MCF 10A (cell line): ENCODE measurements at regions of chr2 and their contacts with region 1.

Region 1: DNA sequence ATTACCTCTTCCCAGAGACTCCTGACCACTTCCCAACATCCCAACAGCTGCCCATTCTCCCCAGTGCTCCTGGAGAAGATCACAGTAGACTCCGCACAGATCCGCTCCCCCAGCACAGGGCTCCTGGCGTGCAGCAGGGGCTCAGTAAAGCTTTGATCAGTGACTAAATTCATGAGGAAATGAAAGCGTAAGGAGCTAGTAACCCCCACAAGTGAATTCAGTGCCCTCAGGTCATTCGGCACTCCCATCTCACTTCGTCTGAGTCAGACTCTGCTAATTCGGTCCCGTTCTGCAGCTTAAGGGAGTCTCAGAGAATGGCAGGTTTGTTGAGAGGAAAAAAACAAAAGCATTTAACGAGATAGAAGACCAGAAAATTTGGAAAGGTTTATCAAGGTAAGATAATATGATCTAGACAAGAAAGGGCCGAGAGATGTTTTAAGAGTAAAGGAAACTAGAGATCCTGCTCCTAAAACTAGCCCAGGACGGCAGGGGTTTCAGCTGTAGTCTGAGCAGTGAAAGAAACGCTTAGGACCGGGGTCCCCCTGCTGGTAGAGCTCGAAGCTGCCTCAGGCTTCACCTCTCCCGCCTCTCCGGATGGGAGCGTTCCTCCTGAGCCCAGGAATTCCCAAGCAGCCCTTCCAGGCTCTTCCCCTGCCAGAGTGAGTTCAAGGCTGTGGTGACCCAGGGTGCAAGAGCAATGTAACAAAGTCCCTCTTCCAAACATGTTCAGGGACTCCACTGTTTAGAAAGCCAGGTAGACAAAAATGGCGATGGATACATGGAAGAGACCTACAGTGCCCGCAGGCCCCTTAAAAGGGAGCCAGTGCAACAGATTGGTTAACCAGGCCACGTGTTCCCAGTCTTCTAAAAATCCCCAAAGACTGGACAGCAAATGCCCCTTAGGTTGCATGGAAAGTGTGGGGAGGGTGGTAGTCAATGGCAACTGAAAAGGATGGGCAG is 127.3 kb downstream of the DNER start:
- DNase-seq: peak; percentile 94
- H3K4me3 Mint-ChIP-seq: peak overlapping the region; percentile 79
- H3K27ac Mint-ChIP-seq: peak overlapping the region; percentile 87
- H3K4me1 Mint-ChIP-seq: peaks cover 29% of the 10 kb centered on the region
- H3K27me3 Mint-ChIP-seq: no peaks in the 10 kb centered on the region
- CTCF ChIP-seq: peak; percentile 91

Region 2: GRCh38 chr2:227890495-227891079 is 1696.4 kb before region 1 on chr2:
- CTCF ChIA-PET with region 1: no interaction called
- POLR2A ChIA-PET with region 1: no interaction called
- intact Hi-C with region 1: loop called (anchors 2 kb)
- DNase-seq: peak; percentile 77
- H3K4me3 Mint-ChIP-seq: no peak overlapping the region
- H3K27ac Mint-ChIP-seq: no peak overlapping the region
- H3K4me1 Mint-ChIP-seq: peaks cover 13% of the 10 kb centered on the region
- H3K27me3 Mint-ChIP-seq: no peaks in the 10 kb centered on the region
- CTCF ChIP-seq: peak; percentile 40

Region 3: DNA sequence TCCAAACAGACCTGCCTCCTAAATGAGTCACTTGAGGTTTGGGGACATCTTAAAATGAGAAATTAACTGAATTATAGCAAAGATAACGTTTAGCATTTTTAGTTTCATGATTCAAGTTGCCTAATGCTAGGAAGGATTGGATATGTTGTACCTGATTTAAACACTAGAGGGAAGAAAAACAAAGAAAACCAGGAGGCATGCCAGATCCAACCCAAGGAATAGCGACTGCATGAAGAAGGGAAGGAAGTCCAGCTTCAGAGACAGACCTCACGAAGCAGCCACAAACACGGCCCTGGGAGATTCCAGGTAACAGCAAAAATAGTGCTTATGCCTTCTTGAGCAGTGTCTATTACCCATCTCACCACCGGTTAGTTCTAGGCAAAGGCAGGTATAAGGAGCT is 905.6 kb before region 1 on chr2:
- CTCF ChIA-PET with region 1: interaction called, 6 read pairs
- POLR2A ChIA-PET with region 1: interaction called, 5 read pairs
- intact Hi-C with region 1: loop called (anchors 2 kb)
- DNase-seq: peak; percentile 67
- H3K4me3 Mint-ChIP-seq: no peak overlapping the region
- H3K27ac Mint-ChIP-seq: no peak overlapping the region
- H3K4me1 Mint-ChIP-seq: peaks cover 7% of the 10 kb centered on the region
- H3K27me3 Mint-ChIP-seq: no peaks in the 10 kb centered on the region
- CTCF ChIP-seq: peak; percentile 65

Region 4: DNA sequence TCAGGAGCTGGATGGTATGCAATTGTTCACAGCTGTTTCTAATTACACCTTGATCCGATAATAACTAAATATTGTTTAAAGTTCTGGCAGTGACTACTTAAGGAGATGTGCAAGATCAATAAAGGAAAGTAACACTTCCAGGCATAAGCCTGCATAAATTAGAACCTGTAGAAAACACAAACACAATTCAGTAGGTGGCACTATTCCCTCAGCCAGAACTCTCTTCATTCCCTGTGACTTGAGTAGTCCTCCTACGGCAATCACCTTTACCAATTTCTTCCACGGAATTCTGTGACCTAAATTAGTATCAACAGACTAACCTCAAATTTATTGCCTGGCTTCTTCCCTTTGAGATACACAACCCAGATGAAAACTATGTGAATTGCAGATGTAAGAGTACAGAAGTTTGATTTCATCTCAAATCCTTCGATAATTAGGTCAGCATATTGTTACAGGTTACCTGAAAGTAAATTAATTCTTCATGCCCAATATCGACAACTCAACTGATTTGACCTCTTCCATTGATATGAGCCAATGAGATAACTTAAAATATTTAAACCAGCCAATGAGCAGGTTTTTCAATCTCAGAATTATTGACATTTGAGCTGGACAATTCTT is 453.8 kb before region 1 on chr2:
- CTCF ChIA-PET with region 1: interaction called, 33 read pairs
- POLR2A ChIA-PET with region 1: interaction called, 4 read pairs
- intact Hi-C with region 1: loop called (anchors 1 kb)
- DNase-seq: peak; percentile 76
- H3K4me3 Mint-ChIP-seq: no peak overlapping the region
- H3K27ac Mint-ChIP-seq: no peak overlapping the region
- H3K4me1 Mint-ChIP-seq: peaks cover 11% of the 10 kb centered on the region
- H3K27me3 Mint-ChIP-seq: no peaks in the 10 kb centered on the region
- CTCF ChIP-seq: peak; percentile 57

Region 5: DNA sequence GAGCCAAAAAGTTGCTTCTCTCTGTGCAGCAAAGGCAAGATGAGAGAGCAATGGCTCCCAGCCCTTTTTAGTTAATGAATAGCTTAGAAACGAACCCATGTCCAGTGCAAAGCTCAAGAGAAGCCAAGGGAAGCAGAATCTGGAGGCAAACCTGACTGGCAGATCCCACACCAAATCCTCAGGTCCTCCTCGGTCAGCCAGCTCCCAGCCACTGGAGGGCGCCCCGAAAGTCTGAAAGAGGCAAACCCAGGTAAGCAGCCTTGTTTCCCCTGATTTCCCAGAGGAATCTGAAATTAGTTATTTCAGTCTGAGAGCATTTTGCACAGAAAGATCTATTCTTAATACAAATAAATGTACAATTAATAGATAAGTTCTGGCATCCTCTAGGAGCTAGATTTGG is 244.7 kb before region 1 on chr2:
- CTCF ChIA-PET with region 1: interaction called, 12 read pairs
- POLR2A ChIA-PET with region 1: interaction called, 5 read pairs
- intact Hi-C with region 1: loop called (anchors 1 kb)
- DNase-seq: peak; percentile 74
- H3K4me3 Mint-ChIP-seq: no peak overlapping the region
- H3K27ac Mint-ChIP-seq: no peak overlapping the region
- H3K4me1 Mint-ChIP-seq: peaks cover 33% of the 10 kb centered on the region
- H3K27me3 Mint-ChIP-seq: no peaks in the 10 kb centered on the region
- CTCF ChIP-seq: no peak

Region 6: GRCh38 chr2:229445019-229445418 is 142.0 kb before region 1 on chr2:
- CTCF ChIA-PET with region 1: interaction called, 10 read pairs
- POLR2A ChIA-PET with region 1: interaction called, 14 read pairs
- intact Hi-C with region 1: loop called (anchors 5 kb)
- DNase-seq: peak; percentile 96
- H3K4me3 Mint-ChIP-seq: peak overlapping the region; percentile 59
- H3K27ac Mint-ChIP-seq: peak overlapping the region; percentile 100
- H3K4me1 Mint-ChIP-seq: peaks cover 45% of the 10 kb centered on the region
- H3K27me3 Mint-ChIP-seq: no peaks in the 10 kb centered on the region
- CTCF ChIP-seq: no peak

Region 7: DNA sequence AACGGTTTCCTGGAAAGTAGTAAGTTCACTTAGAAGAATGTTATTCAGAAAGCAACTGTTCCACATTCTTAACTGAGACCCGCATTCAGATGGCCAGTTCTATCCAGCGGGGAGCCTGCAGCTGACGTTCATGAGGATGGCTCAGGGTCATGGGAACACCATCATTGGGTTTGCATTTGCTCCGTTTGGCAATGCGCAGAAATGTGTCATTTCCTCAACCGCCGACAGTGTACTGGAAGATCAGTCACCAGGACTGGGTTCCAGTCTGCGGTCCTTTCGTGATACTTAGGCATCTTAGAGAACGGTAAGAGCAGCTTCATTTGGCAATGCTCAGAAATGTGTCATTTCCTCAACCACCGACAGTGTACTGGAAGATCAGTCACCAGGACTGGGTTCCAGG is 23.3 kb after region 1 on chr2:
- CTCF ChIA-PET with region 1: interaction called, 12 read pairs
- POLR2A ChIA-PET with region 1: no interaction called
- intact Hi-C with region 1: no loop called
- DNase-seq: peak; percentile 88
- H3K4me3 Mint-ChIP-seq: no peak overlapping the region
- H3K27ac Mint-ChIP-seq: no peak overlapping the region
- H3K4me1 Mint-ChIP-seq: no peaks in the 10 kb centered on the region
- H3K27me3 Mint-ChIP-seq: no peaks in the 10 kb centered on the region
- CTCF ChIP-seq: no peak